Sigmoid colon (tissue), 7 donors: ENCODE measurements at regions of chr4 and their contacts with region 1.

Region 1: DNA sequence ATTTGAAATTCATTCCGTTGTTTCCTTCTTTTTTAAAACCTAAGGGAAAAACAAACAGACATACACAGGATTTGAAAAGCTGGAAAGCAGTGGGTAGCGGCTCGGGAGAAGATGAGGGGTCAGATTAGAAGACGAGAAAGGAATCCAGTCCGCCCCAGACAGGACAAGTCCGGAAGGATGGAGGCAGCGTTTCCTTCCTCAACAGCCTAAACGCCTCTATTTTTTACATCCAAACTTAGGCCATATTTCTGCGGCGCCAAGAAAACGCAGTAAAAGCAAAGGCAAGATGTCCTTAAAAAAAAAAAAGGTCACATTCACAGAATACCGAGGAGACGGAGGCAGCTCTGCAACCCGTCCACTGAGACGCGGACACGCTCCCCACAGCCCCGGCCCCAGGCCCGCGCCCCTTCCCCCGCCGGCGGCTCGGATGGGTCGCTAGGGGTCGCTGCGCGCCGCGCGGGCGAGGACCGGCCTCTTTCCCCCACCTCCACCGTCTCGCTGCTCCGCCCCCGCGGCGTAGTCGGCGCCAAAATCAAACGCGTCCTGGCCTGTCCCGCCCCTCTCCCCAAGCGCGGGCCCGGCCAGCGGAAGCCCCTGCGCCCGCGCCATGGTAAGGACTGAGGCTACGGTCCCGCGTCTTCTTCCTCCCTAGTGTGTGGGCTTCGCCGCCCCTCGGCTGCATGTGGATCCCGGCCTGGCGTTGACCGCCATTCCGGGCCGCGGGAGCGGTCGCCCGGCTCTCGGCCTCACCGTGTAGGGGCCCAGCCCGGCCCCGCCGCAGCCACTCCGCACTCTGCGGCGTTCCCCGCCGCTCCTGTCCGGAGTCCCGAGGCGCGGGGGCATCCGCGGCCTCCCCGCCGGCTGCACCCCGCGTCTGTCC is at the start of gene MND1:
- DNase-seq: peak; percentile 88
- H3K4me3 ChIP-seq: peak within 1 kb of the TSS; percentile 61 to 91 (median 84)
- H3K27ac ChIP-seq: peak within 1 kb of the TSS; percentile 4 to 75 (median 40)
- H3K4me1 ChIP-seq: peaks cover 0 to 11% (median 8%) of the 10 kb centered on the region in 4 donors
- H3K27me3 ChIP-seq: no peaks in the 10 kb centered on the region
- CTCF ChIP-seq: peak; percentile 50 to 99 (median 70)
- EP300 ChIP-seq: no peak
- POLR2A ChIP-seq: no peak
- total RNA-seq, gene MND1: 2.4 TPM in 1 of 4 donors, not detected in the others

Region 2: DNA sequence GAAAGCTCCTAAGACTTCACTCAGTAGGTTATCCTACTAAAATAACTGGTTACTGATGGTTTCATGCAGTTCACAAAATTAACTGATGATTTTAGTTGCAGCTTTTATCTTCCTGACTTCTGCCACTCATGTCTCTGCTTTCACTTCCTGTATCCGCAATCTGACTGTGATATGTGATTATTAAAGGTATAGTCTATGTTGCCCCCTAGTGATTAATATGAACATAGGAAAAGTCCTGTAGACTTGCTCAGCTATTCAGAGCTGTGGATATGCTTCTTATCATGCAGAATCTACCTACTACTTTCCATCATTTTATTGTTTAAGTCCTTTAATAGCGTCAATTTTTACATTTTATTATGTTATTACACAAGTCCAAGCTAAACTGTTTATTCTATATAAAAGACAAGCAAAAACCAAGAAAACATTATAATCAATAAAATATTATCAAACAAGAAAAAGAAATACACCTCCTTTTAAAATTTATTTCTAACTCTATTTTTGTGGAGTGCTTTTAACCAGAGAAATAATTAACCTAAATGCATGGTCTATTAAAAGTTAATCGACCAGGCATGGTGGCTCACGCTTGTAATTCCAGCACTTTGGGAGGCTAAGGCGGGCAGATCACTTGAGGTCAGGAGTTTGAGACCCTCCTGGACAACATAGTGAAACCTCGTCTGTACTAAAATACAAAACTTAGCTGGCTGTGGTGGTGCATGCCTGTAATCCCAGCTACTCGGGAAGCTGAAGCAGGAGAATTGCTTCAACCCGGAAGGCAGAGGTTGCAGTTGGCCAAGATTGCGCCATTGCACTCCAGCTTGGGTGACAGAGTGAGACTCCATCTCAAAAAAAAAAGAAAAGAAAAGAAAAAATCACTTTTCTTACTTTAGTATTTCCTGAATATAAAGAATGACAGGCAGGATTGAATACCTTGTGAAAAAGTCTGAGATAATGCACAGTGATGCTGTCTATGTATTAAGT is 299.3 kb after region 1 on chr4:
- intact Hi-C with region 1: loop called (anchors 2 kb)
- DNase-seq: no peak
- H3K4me3 ChIP-seq: no peak overlapping the region
- H3K27ac ChIP-seq: no peak overlapping the region
- H3K4me1 ChIP-seq: no peaks in the 10 kb centered on the region
- H3K27me3 ChIP-seq: no peaks in the 10 kb centered on the region
- CTCF ChIP-seq: peak; percentile 28 to 47 (median 38)
- EP300 ChIP-seq: no peak
- POLR2A ChIP-seq: no peak

Region 3: GRCh38 chr4:153850533-153851280 is 506.3 kb after region 1 on chr4:
- intact Hi-C with region 1: no loop called
- DNase-seq: no peak
- H3K4me3 ChIP-seq: no peak overlapping the region
- H3K27ac ChIP-seq: no peak overlapping the region
- H3K4me1 ChIP-seq: no peaks in the 10 kb centered on the region
- H3K27me3 ChIP-seq: no peaks in the 10 kb centered on the region
- CTCF ChIP-seq: no peak
- EP300 ChIP-seq: no peak
- POLR2A ChIP-seq: no peak

Region 4: GRCh38 chr4:154124539-154125255 is 780.3 kb after region 1 on chr4:
- intact Hi-C with region 1: no loop called
- DNase-seq: no peak
- H3K4me3 ChIP-seq: no peak overlapping the region
- H3K27ac ChIP-seq: no peak overlapping the region
- H3K4me1 ChIP-seq: no peaks in the 10 kb centered on the region
- H3K27me3 ChIP-seq: no peaks in the 10 kb centered on the region
- CTCF ChIP-seq: no peak
- EP300 ChIP-seq: no peak
- POLR2A ChIP-seq: no peak